Mammary epithelial cell (primary cell): ENCODE measurements at regions of chr20 and their contacts with region 1.

Region 1: DNA sequence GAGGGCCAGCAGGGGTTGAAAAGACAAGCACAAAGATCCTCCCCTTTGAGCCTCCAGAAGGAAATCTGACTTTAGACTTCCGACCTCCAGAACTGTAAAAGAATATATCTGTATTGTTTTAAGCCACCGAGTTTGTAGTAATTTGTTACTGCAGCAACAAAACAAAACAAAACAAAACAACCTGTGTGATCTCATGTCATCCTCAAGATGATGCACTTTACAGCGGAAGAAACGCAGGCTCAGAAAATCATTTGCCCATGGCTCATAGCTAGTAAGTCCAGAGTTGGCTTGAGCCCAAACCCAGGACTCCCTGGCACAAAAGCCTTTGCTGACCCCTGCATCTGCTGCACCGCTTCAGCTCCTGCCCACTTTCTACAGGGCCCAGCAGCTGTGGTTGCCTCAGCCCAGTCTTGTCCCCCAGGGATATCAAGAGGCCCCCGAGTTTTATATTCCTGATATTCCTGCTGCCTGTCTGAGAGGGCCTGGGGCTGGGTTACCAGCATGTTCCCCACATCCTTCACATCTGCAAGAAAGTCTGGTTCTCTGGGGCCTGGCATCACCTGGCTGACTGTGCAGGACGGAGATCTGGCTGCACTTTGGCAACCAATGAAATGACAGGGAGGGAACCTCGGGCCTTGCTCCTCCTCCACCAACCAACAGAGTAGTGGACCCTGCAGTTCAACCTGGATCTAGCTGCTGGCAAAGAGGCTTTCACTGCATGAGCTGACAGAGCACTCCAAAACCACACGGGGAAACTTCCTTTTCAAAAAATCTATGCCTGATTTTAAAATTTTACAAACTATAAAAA is 56.9 kb downstream of the JPH2 start:
- DNase-seq: no peak
- H3K4me3 ChIP-seq: no peak overlapping the region
- H3K27ac ChIP-seq: no peak overlapping the region
- H3K4me1 ChIP-seq: no peaks in the 10 kb centered on the region
- H3K27me3 ChIP-seq: no peaks in the 10 kb centered on the region
- CTCF ChIP-seq: no peak

Region 2: GRCh38 chr20:43514062-43514999 is 615.8 kb before region 1 on chr20:
- CTCF ChIA-PET with region 1: no interaction called
- dilution Hi-C with region 1: no loop called
- in situ Hi-C with region 1: no loop called
- intact Hi-C with region 1: no loop called
- DNase-seq: peak; percentile 94
- H3K4me3 ChIP-seq: no peak overlapping the region
- H3K27ac ChIP-seq: no peak overlapping the region
- H3K4me1 ChIP-seq: no peaks in the 10 kb centered on the region
- H3K27me3 ChIP-seq: no peaks in the 10 kb centered on the region
- CTCF ChIP-seq: no peak

Region 3: GRCh38 chr20:43863821-43864544 is 266.1 kb before region 1 on chr20:
- CTCF ChIA-PET with region 1: no interaction called
- dilution Hi-C with region 1: no loop called
- in situ Hi-C with region 1: no loop called
- intact Hi-C with region 1: no loop called
- DNase-seq: no peak
- H3K4me3 ChIP-seq: no peak overlapping the region
- H3K27ac ChIP-seq: no peak overlapping the region
- H3K4me1 ChIP-seq: no peaks in the 10 kb centered on the region
- H3K27me3 ChIP-seq: no peaks in the 10 kb centered on the region
- CTCF ChIP-seq: no peak

Region 4: GRCh38 chr20:44176833-44177534 is 46.9 kb after region 1 on chr20:
- CTCF ChIA-PET with region 1: no interaction called
- dilution Hi-C with region 1: loop called (anchors 10 kb)
- in situ Hi-C with region 1: no loop called
- intact Hi-C with region 1: no loop called
- DNase-seq: no peak
- H3K4me3 ChIP-seq: no peak overlapping the region
- H3K27ac ChIP-seq: peak overlapping the region; percentile 76
- H3K4me1 ChIP-seq: peaks cover 14% of the 10 kb centered on the region
- H3K27me3 ChIP-seq: no peaks in the 10 kb centered on the region
- CTCF ChIP-seq: no peak

Region 5: GRCh38 chr20:44187051-44187762 is 57.1 kb after region 1 on chr20 and contains the start of gene JPH2:
- CTCF ChIA-PET with region 1: no interaction called
- dilution Hi-C with region 1: no loop called
- in situ Hi-C with region 1: no loop called
- intact Hi-C with region 1: no loop called
- DNase-seq: peak; percentile 83
- H3K4me3 ChIP-seq: peak within 1 kb of the TSS; percentile 52 to 60 (median 55)
- H3K27ac ChIP-seq: peak within 1 kb of the TSS; percentile 87
- H3K4me1 ChIP-seq: peaks cover 45% of the 10 kb centered on the region
- H3K27me3 ChIP-seq: no peaks in the 10 kb centered on the region
- CTCF ChIP-seq: no peak
- total RNA-seq, gene JPH2: 5.5 to 14.2 TPM